ENCODE measurements at regions of chr16 and their contacts with region 1.

Region 1: DNA sequence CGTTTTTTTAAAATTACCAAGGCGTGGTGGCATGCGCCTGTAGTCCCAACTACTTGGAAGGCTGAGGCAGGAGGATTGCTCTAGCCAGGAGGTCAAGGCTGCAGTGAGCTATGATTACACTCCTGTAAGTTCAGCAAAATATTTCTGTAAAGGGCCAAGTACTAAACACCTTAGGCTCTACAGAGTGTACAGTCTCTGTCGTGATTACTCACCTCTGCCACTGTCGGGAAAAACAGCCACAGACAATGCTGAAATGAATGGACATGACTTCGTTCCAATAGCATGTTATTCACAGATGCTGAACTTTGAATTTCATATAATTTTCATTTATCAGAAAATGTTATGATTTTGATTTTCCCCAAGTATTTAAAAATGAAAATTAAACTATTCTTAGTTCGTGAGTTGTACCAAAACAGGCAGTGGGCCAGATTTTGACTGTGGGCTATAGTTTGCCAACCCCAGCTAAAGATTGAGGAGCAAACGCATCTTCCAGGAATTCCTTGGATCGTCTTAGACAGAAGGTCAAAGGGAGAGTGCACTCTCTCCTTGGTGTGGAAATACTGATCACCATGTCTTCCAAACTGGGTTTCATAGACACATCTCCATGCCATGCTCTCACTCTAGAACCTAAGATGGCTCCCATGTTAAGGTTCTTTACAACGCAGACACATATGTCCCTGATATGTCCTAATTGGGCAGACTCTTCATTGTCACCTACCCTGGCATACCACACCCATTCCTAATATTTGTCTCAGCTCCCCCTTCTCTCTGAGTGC is 89.5 kb downstream of the MARF1 start:
- DNase-seq: no peak
- H3K4me3 ChIP-seq: no peak overlapping the region
- H3K27ac ChIP-seq: peak overlapping the region in 1 of 4 donors; percentile 30
- H3K4me1 ChIP-seq: peaks cover 0 to 25% (median 17%) of the 10 kb centered on the region in 4 donors
- H3K27me3 ChIP-seq: no peaks in the 10 kb centered on the region
- CTCF ChIP-seq: no peak
- EP300 ChIP-seq: no peak
- POLR2A ChIP-seq: no peak

Region 2: DNA sequence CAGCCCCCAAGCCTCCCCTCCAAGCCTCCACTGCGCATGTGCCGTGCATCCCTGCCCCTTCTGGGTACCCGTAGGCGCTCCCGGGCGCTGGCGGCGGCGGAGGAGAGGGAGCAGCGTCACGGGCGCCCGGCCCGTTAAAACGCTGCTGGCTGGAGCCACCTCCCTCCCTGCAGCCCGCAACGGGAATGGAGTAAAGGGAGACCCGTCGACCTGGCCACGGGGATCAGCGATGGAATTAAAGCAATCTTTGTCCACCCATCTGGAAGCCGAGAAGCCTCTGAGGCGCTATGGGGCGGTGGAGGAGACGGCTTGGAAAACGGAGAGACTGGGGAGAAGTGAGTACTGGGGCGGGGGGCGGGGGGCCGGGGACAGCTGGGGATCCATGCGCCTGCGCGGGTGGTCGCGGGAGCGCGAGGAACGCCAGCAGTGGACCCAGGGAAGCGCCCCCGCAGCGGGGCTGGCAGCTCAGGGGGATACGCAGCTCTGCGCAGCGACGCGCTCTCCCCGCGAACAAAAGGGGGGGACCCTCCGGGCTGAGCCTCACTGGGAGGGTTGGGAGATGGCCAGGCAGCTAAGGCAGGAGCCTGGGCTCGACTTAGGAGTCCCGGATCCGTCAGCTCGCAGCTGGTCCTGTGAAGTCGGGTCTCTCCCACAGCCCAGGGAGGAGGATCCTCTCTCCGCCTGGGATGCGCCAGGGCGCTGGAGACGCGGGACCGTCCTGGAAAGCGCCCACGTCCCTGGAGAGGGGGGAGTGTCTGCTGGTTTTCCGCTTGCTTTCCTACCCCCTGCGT is 118.9 kb before region 1 on chr16 and contains the start of gene BMERB1:
- intact Hi-C with region 1: loop called (anchors 5 kb)
- DNase-seq: no peak
- H3K4me3 ChIP-seq: peak within 1 kb of the TSS; percentile 78 to 95 (median 91)
- H3K27ac ChIP-seq: peak within 1 kb of the TSS; percentile 83 to 91 (median 85)
- H3K4me1 ChIP-seq: peaks cover 2 to 31% (median 23%) of the 10 kb centered on the region in 4 donors
- H3K27me3 ChIP-seq: no peaks in the 10 kb centered on the region
- CTCF ChIP-seq: peak in 1 of 3 experiments; percentile 24
- EP300 ChIP-seq: no peak
- POLR2A ChIP-seq: peak; percentile 67
- total RNA-seq, gene BMERB1: 75.6 to 103 (median 92.9) TPM

Region 3: GRCh38 chr16:15482068-15482747 is 71.3 kb before region 1 on chr16:
- intact Hi-C with region 1: loop called (anchors 10 kb)
- DNase-seq: peak; percentile 95
- H3K4me3 ChIP-seq: no peak overlapping the region
- H3K27ac ChIP-seq: peak overlapping the region; percentile 16 to 64 (median 51)
- H3K4me1 ChIP-seq: peaks cover 0 to 23% (median 15%) of the 10 kb centered on the region in 4 donors
- H3K27me3 ChIP-seq: no peaks in the 10 kb centered on the region
- CTCF ChIP-seq: peak in 1 of 3 experiments; percentile 9
- EP300 ChIP-seq: no peak
- POLR2A ChIP-seq: no peak

Region 4: DNA sequence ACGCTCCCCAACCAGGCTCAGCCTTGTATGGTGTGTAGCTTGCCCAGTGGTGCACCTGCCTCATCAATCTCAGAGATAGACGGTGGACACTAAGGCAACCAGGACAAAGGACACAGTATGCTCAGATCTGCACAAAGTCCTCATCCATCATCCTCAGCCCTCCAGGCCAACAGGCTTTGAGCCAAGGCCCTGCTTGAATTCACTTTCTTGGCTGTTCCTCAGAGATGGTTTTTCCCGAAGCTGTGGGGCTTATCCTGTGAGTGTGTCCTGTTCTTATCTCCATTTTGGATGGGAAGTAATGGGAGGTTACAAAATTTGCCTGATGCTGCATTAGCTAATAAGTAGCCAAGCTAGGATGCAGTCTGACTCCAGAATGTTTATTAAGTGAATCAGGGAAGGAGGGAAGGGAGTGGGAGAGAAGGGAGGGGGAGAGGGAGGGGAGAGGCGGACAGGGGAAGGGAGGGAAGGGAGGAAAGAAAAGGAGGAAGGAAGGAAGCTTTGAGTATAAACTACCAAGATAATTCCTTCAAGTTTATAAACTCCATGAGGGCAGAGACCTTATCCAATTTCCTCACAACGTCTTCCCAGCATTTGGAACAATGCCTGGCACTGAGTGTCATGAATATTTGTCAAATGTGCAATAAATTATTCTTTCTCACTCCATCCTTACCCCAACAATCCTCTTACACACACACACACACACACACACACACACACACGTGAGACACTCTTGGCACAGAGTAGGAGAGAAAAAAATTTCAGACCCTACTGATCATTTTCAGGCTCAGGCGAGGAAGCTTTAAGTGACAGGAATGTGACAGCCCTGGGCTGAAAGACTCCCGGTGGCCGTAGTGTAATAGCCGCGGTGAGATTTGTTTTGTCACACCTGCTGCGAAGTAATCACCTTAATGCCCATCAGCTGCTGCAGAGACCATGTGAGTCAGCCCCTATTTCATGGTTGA is 34.8 kb before region 1 on chr16:
- intact Hi-C with region 1: no loop called
- DNase-seq: peak; percentile 95
- H3K4me3 ChIP-seq: no peak overlapping the region
- H3K27ac ChIP-seq: peak overlapping the region; percentile 72 to 84 (median 78)
- H3K4me1 ChIP-seq: peaks cover 13 to 63% (median 61%) of the 10 kb centered on the region in 4 donors
- H3K27me3 ChIP-seq: no peaks in the 10 kb centered on the region
- CTCF ChIP-seq: no peak
- EP300 ChIP-seq: peak; percentile 73
- POLR2A ChIP-seq: no peak